Right lobe of liver (tissue), 6 donors: ENCODE measurements at regions of chr15 and their contacts with region 1.

Region 1: DNA sequence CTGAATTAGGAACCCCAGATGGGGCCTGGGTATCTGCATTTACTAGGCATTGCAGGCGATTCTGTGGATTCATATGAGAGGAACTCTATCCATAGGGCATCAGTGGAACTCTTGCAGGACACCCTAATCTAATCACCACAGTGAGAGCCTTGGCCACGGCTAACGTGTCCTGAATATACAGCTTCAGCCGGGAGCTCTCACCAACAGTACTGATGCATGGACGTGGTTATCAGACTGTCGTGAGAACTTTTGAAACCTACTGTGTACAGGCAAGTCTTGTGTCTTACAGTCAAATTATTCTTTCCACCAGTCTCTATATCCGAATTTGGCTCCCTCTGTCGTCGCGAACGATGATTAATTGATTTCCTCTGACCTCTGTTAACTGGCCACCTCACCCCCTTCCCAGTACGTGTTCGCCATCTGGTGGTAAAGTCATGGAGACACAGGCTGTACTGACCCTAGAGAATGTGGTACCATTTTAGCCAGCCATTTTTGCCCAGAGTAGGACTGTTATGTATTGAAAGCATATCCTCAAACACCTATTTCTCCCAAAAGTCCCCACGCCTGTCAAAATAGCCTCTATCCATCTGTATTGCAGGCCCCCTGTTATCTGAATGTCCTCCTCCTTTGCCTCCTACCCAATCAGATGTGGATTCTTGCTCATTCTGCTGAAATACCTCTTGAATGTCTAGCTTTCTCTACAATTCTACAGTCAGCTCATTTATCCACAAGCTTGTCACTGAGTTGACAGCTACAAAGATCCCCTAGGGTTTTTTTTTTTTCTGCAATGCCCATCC is 39.7 kb downstream of the GLDN start:
- DNase-seq: peak in 1 of 3 donors; percentile 59
- ATAC-seq: peak; percentile 93 to 98 (median 94)
- H3K4me3 ChIP-seq: no peak overlapping the region
- H3K27ac ChIP-seq: no peak overlapping the region
- H3K4me1 ChIP-seq: no peaks in the 10 kb centered on the region
- H3K27me3 ChIP-seq: no peaks in the 10 kb centered on the region
- CTCF ChIP-seq: peak; percentile 79 to 94 (median 86)
- POLR2A ChIP-seq: no peak

Region 2: DNA sequence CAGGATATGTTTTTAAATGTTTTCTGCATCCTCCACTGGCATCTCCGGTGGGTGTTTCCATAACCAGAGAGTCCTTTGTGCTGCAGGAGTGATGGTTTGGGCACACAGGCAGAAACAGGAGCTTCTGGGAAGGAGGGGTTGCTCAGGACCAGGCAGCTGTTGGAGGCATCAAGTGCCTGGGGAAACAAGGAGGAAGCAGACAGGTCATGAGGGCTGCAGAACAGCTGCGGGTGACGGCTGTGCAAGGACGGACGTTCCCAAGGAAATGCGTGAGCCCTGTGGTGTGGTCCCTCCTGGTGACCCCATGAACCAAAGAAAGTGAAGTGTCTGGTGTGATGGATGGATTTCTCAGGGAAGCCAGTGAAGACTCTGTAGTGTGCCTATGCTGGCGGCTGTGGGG is 225.3 kb before region 1 on chr15:
- intact Hi-C with region 1: loop called in 1 of 2 experiments (anchors 5 kb)
- DNase-seq: no peak
- ATAC-seq: no peak
- H3K4me3 ChIP-seq: no peak overlapping the region
- H3K27ac ChIP-seq: no peak overlapping the region
- H3K4me1 ChIP-seq: no peaks in the 10 kb centered on the region
- H3K27me3 ChIP-seq: no peaks in the 10 kb centered on the region
- CTCF ChIP-seq: no peak
- POLR2A ChIP-seq: no peak

Region 3: DNA sequence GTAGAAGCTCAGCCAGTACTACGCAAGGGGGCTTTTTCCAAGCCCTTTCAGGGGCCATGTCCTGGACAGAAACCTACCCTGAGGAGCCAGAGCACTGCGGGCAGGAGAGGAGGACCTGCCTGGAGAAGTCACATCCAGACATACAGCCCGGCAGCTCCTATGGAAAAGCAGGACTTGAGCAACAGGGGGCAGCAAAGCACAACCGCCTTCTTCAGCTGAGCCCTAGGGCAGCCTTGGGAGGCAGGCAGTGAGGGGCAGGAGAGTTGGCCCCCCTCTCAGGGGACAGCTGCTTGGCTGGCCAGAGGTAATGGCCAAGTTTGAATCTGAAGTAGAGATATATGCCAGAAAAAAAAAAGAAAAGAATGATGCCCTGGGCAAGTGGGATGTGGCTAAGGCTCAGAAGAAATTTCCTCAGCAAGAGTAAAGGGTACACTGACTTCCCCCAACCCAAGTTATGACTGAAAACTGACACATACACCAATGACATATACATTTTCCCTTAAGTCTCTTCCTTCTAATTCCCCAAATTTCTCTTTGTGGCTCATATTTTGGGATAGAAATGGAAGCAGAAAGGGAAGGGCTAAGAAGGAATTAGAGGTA is 99.7 kb before region 1 on chr15:
- intact Hi-C with region 1: loop called (anchors 10 kb)
- DNase-seq: peak; percentile 51 to 67 (median 65)
- ATAC-seq: peak; percentile 76 to 93 (median 89)
- H3K4me3 ChIP-seq: no peak overlapping the region
- H3K27ac ChIP-seq: no peak overlapping the region
- H3K4me1 ChIP-seq: no peaks in the 10 kb centered on the region
- H3K27me3 ChIP-seq: no peaks in the 10 kb centered on the region
- CTCF ChIP-seq: peak; percentile 45 to 69 (median 56)
- POLR2A ChIP-seq: no peak

Region 4: GRCh38 chr15:51310097-51310501 is 71.1 kb before region 1 on chr15:
- intact Hi-C with region 1: no loop called
- DNase-seq: no peak
- ATAC-seq: no peak
- H3K4me3 ChIP-seq: no peak overlapping the region
- H3K27ac ChIP-seq: no peak overlapping the region
- H3K4me1 ChIP-seq: no peaks in the 10 kb centered on the region
- H3K27me3 ChIP-seq: no peaks in the 10 kb centered on the region
- CTCF ChIP-seq: no peak
- POLR2A ChIP-seq: no peak

Region 5: GRCh38 chr15:51602484-51602883 is 221.3 kb after region 1 on chr15:
- intact Hi-C with region 1: no loop called
- DNase-seq: no peak
- ATAC-seq: no peak
- H3K4me3 ChIP-seq: no peak overlapping the region
- H3K27ac ChIP-seq: no peak overlapping the region
- H3K4me1 ChIP-seq: no peaks in the 10 kb centered on the region
- H3K27me3 ChIP-seq: no peaks in the 10 kb centered on the region
- CTCF ChIP-seq: no peak
- POLR2A ChIP-seq: no peak

Region 6: DNA sequence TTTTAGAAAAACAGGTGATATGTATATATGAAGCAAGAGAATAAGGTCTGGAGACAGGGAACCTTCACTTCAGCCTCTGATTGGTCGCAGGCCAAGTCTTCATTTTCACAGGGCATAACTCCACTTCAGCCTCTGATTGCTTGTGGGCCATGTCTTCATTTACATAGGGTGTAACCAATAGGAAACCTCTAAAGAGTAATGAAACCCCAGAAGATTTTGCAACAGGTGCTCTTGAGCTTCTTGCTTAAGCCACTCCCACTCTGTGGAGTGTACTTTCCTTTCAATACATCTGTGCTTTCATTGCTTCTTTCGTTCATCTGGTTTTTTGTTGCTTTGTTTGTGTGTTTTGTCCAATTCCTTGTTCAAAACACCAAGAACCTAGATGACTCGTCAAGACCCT is 277.5 kb after region 1 on chr15:
- intact Hi-C with region 1: no loop called
- DNase-seq: no peak
- ATAC-seq: no peak
- H3K4me3 ChIP-seq: no peak overlapping the region
- H3K27ac ChIP-seq: no peak overlapping the region
- H3K4me1 ChIP-seq: no peaks in the 10 kb centered on the region
- H3K27me3 ChIP-seq: no peaks in the 10 kb centered on the region
- CTCF ChIP-seq: no peak
- POLR2A ChIP-seq: no peak